Activated CD8-positive, alpha-beta T cell treated with anti-CD3 and anti-CD28 coated beads, Interleukin-2, amount 10 ng/mL, durations not matched to agents 7 days and 5 days (primary cell): ENCODE measurements at regions of chr1 and their contacts with region 1.

Region 1: DNA sequence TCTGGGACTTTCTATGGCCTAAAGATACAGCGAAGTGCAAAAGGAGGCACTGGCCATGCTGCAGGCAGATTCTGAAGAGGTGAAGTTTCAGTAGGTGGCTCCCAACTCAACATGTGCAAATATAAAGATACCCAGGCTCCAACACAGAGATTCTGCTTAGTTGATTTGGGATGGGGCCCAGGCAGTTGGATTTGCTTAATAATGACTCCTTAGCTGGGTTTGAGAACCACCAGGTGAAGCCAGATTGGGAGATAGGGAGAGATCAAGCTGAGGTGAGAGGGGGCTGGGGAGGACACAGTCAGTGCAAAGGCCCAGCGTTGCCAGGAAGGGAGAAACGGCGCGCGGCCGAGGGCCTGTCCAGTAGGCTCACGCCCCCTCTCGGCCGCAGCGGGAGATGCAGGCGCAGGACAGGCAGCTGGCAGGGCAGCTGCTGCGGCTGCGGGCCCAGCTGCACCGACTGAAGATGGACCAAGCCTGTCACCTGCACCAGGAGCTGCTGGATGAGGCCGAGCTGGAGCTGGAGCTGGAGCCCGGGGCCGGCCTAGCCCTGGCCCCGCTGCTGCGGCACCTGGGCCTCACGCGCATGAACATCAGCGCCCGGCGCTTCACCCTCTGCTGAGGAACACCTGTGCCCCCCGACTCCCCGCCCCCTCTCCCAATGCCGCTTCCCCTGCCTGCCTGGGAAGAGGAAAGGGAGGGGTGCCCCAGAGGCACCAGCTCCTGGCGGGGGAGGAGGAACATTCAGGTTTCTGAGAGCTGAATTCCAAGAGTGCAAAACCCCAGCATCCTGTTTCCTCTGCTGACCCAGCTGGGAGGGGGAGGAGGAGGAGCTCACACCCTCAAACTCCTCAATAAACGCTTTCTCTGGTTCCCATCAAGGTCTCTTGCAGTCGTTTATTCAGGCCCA is 1.2 kb downstream of the FAM167B start:
- DNase-seq: peak; percentile 86
- ATAC-seq: peak; percentile 25
- H3K4me3 Mint-ChIP-seq: peak overlapping the region; percentile 99
- H3K27ac Mint-ChIP-seq: peak overlapping the region; percentile 95
- H3K4me1 Mint-ChIP-seq: peaks cover 50% of the 10 kb centered on the region
- H3K27me3 Mint-ChIP-seq: no peaks in the 10 kb centered on the region

Region 2: GRCh38 chr1:32200226-32201010 is 47.8 kb before region 1 on chr1 and contains the start of gene CCDC28B:
- CTCF ChIA-PET with region 1: interaction called, 13 read pairs
- POLR2A ChIA-PET with region 1: interaction called, 10 read pairs
- DNase-seq: peak; percentile 72
- ATAC-seq: peak; percentile 55
- H3K4me3 Mint-ChIP-seq: peak within 1 kb of the TSS; percentile 92
- H3K27ac Mint-ChIP-seq: peak within 1 kb of the TSS; percentile 76
- H3K4me1 Mint-ChIP-seq: peaks cover 78% of the 10 kb centered on the region
- H3K27me3 Mint-ChIP-seq: no peaks in the 10 kb centered on the region
- total RNA-seq, gene CCDC28B: 71.4 to 72.8 TPM

Region 3: GRCh38 chr1:32228771-32229170 is 19.5 kb before region 1 on chr1:
- CTCF ChIA-PET with region 1: interaction called, 26 read pairs
- POLR2A ChIA-PET with region 1: interaction called, 6 read pairs
- DNase-seq: no peak
- ATAC-seq: no peak
- H3K4me3 Mint-ChIP-seq: no peak overlapping the region
- H3K27ac Mint-ChIP-seq: no peak overlapping the region
- H3K4me1 Mint-ChIP-seq: peaks cover 7% of the 10 kb centered on the region
- H3K27me3 Mint-ChIP-seq: no peaks in the 10 kb centered on the region

Region 4: GRCh38 chr1:32266921-32267591 is 18.8 kb after region 1 on chr1:
- CTCF ChIA-PET with region 1: interaction called, 19 read pairs
- POLR2A ChIA-PET with region 1: interaction called, 137 read pairs
- DNase-seq: no peak
- ATAC-seq: peak; percentile 35
- H3K4me3 Mint-ChIP-seq: peak overlapping the region; percentile 66
- H3K27ac Mint-ChIP-seq: peak overlapping the region; percentile 93
- H3K4me1 Mint-ChIP-seq: peaks cover 66% of the 10 kb centered on the region
- H3K27me3 Mint-ChIP-seq: no peaks in the 10 kb centered on the region

Region 5: GRCh38 chr1:32291708-32292492 is 43.7 kb after region 1 on chr1 and contains the start of gene HDAC1:
- CTCF ChIA-PET with region 1: interaction called, 30 read pairs
- POLR2A ChIA-PET with region 1: interaction called, 20 read pairs
- DNase-seq: peak; percentile 98
- ATAC-seq: peak; percentile 99
- H3K4me3 Mint-ChIP-seq: peak within 1 kb of the TSS; percentile 100
- H3K27ac Mint-ChIP-seq: peak within 1 kb of the TSS; percentile 98
- H3K4me1 Mint-ChIP-seq: peaks cover 57% of the 10 kb centered on the region
- H3K27me3 Mint-ChIP-seq: no peaks in the 10 kb centered on the region
- total RNA-seq, gene HDAC1: 219 to 227 TPM

Region 6: GRCh38 chr1:32335790-32336590 is 87.8 kb after region 1 on chr1 and contains the start of gene MARCKSL1:
- CTCF ChIA-PET with region 1: interaction called, 16 read pairs
- POLR2A ChIA-PET with region 1: interaction called, 14 read pairs
- DNase-seq: peak; percentile 85
- ATAC-seq: peak; percentile 66
- H3K4me3 Mint-ChIP-seq: peak within 1 kb of the TSS; percentile 81
- H3K27ac Mint-ChIP-seq: peak within 1 kb of the TSS; percentile 53
- H3K4me1 Mint-ChIP-seq: peaks cover 40% of the 10 kb centered on the region
- H3K27me3 Mint-ChIP-seq: peaks cover 3% of the 10 kb centered on the region
- total RNA-seq, gene MARCKSL1: 23.1 to 26.1 TPM